IMR-90 (cell line): ENCODE measurements at regions of chr12 and their contacts with region 1.

Region 1: GRCh38 chr12:55817346-55818139 is at the starts of genes ORMDL2 and SARNP:
- DNase-seq: peak; percentile 100
- ATAC-seq: peak; percentile 97
- H3K4me3 ChIP-seq: peak within 1 kb of the TSS; percentile 63
- H3K27ac ChIP-seq: peak within 1 kb of the TSS; percentile 84
- H3K4me1 ChIP-seq: peaks cover 7% of the 10 kb centered on the region
- H3K27me3 ChIP-seq: no peaks in the 10 kb centered on the region
- CTCF ChIP-seq: no peak
- POLR2A ChIP-seq: peak; percentile 74; the same call in 1 of the 2 replicates
- RAD21 ChIP-seq: no peak
- total RNA-seq, gene ORMDL2: 20.4 and 23.3 TPM in 2 replicates
- total RNA-seq, gene SARNP: 46.8 and 132 TPM in 2 replicates

Region 2: DNA sequence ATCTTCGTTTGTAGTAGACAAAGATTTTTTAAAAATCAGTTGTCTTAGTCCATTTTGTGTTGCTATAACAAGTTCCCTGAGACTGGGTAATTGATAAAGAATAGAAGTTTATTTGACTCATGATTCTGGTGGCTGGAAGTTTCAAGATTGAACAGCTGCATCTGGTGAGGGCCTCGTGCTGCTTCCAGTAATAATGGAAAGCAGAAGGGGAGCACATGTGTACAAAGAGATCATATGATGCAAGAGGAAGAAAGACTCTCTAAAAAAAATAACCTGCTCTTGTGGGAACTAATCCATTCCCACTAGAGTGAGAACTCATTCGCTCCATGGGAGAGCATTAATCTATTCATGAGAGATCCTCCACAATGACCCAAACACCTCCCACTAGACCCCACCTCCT is 938.4 kb before region 1 on chr12:
- CTCF ChIA-PET with region 1: no interaction called
- POLR2A ChIA-PET with region 1: no interaction called
- dilution Hi-C with region 1: no loop called
- in situ Hi-C with region 1: no loop called
- intact Hi-C with region 1: no loop called
- DNase-seq: peak; percentile 25
- ATAC-seq: no peak
- H3K4me3 ChIP-seq: no peak overlapping the region
- H3K27ac ChIP-seq: no peak overlapping the region
- H3K4me1 ChIP-seq: no peaks in the 10 kb centered on the region
- H3K27me3 ChIP-seq: no peaks in the 10 kb centered on the region
- CTCF ChIP-seq: no peak
- POLR2A ChIP-seq: no peak
- RAD21 ChIP-seq: no peak

Region 3: GRCh38 chr12:55829967-55830600 is 12.5 kb after region 1 on chr12:
- CTCF ChIA-PET with region 1: no interaction called
- POLR2A ChIA-PET with region 1: interaction called, 19 read pairs
- dilution Hi-C with region 1: no loop called
- in situ Hi-C with region 1: no loop called
- intact Hi-C with region 1: no loop called
- DNase-seq: no peak
- ATAC-seq: peak; percentile 28
- H3K4me3 ChIP-seq: peak overlapping the region; percentile 78
- H3K27ac ChIP-seq: peak overlapping the region; percentile 66
- H3K4me1 ChIP-seq: peaks cover 14% of the 10 kb centered on the region; the same call in 1 of the 2 replicates
- H3K27me3 ChIP-seq: no peaks in the 10 kb centered on the region
- CTCF ChIP-seq: 0 out of 2 replicates have a peak, but pooled peaks have one; percentile 3
- POLR2A ChIP-seq: 0 out of 2 replicates have a peak, but pooled peaks have one; percentile 8
- RAD21 ChIP-seq: no peak

Region 4: GRCh38 chr12:55926738-55927587 is 109.4 kb after region 1 on chr12:
- CTCF ChIA-PET with region 1: interaction called, 3 read pairs
- POLR2A ChIA-PET with region 1: interaction called, 6 read pairs
- dilution Hi-C with region 1: no loop called
- in situ Hi-C with region 1: loop called (anchors 10 kb)
- intact Hi-C with region 1: loop called (anchors 5 kb)
- DNase-seq: peak; percentile 91
- ATAC-seq: peak; percentile 70
- H3K4me3 ChIP-seq: peak overlapping the region; percentile 83
- H3K27ac ChIP-seq: peak overlapping the region; percentile 94
- H3K4me1 ChIP-seq: peaks cover 13% of the 10 kb centered on the region
- H3K27me3 ChIP-seq: no peaks in the 10 kb centered on the region
- CTCF ChIP-seq: peak; percentile 64
- POLR2A ChIP-seq: peak; percentile 84
- RAD21 ChIP-seq: no peak; the same call in 1 of the 2 replicates

Region 5: GRCh38 chr12:55940065-55940732 is 122.7 kb after region 1 on chr12:
- CTCF ChIA-PET with region 1: no interaction called
- POLR2A ChIA-PET with region 1: no interaction called
- dilution Hi-C with region 1: no loop called
- in situ Hi-C with region 1: loop called (anchors 10 kb)
- intact Hi-C with region 1: no loop called
- DNase-seq: peak; percentile 81
- ATAC-seq: peak; percentile 98
- H3K4me3 ChIP-seq: no peak overlapping the region
- H3K27ac ChIP-seq: no peak overlapping the region
- H3K4me1 ChIP-seq: peaks cover 4% of the 10 kb centered on the region
- H3K27me3 ChIP-seq: no peaks in the 10 kb centered on the region
- CTCF ChIP-seq: peak; percentile 90
- POLR2A ChIP-seq: no peak
- RAD21 ChIP-seq: peak; percentile 94

Region 6: DNA sequence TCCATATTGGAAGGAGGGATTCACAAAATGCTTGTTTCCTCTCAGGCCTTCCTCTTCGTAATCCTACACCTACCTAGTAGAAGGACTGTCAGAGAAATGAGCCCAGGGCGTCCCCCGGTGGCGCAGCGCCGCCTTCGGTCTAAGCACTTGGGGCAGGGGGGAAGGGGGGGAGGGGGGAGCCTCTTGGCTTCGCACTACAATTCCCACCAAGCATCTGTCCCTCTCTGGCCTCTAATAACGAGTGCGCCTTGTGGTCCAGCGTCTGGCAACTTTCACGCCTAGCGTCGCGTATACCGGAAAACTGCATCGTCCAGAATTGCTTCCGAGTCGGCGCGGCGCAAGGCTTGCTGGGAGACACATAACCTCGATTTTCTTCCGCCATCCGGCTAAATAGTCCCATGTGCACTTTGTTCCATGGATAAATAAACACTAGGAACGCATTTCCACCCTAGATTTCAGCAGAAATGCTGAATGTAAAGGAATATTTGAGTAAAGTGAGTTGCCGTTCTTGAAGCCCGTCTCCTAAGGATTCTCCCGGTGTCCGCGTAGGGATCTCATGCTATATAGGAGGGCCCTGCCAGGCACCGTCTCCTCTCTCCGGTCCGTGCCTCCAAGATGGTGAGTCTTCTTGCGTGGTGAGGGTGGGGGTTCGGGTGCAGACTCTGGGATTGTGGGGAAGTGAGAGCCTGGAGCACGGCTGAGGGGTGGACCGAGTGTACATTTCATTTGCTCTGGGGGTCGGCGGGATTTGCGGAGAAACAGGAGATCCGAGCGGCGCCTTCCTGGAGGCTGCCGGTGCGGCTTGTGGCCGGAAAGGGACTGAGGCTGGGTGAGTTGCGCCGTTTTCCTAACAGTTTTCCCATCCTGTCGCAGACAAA is 224.2 kb after region 1 on chr12 and contains the start of gene RPS26:
- CTCF ChIA-PET with region 1: no interaction called
- POLR2A ChIA-PET with region 1: interaction called, 3 read pairs
- dilution Hi-C with region 1: no loop called
- in situ Hi-C with region 1: no loop called
- intact Hi-C with region 1: loop called (anchors 10 kb)
- DNase-seq: peak; percentile 100
- ATAC-seq: peak; percentile 88
- H3K4me3 ChIP-seq: peak within 1 kb of the TSS; percentile 93
- H3K27ac ChIP-seq: peak within 1 kb of the TSS; percentile 90
- H3K4me1 ChIP-seq: no peaks in the 10 kb centered on the region; the same call in 1 of the 2 replicates
- H3K27me3 ChIP-seq: no peaks in the 10 kb centered on the region
- CTCF ChIP-seq: peak; percentile 53
- POLR2A ChIP-seq: peak; percentile 99
- RAD21 ChIP-seq: peak; percentile 65
- total RNA-seq, gene RPS26: 307 and 977 TPM in 2 replicates

Region 7: GRCh38 chr12:56104109-56104814 is 286.7 kb after region 1 on chr12 and contains the start of gene PA2G4:
- CTCF ChIA-PET with region 1: no interaction called
- POLR2A ChIA-PET with region 1: no interaction called
- dilution Hi-C with region 1: no loop called
- in situ Hi-C with region 1: no loop called
- intact Hi-C with region 1: loop called (anchors 5 kb)
- DNase-seq: peak; percentile 98
- ATAC-seq: peak; percentile 97
- H3K4me3 ChIP-seq: peak within 1 kb of the TSS; percentile 88
- H3K27ac ChIP-seq: peak within 1 kb of the TSS; percentile 94
- H3K4me1 ChIP-seq: peaks cover 5% of the 10 kb centered on the region; the same call in 1 of the 2 replicates
- H3K27me3 ChIP-seq: no peaks in the 10 kb centered on the region
- CTCF ChIP-seq: no peak
- POLR2A ChIP-seq: peak; percentile 70
- RAD21 ChIP-seq: no peak; the same call in 1 of the 2 replicates
- total RNA-seq, gene PA2G4: 198 and 251 TPM in 2 replicates